Naive thymus-derived CD4-positive, alpha-beta T cell (primary cell): ENCODE measurements at regions of chr2 and their contacts with region 1.

Region 1: GRCh38 chr2:203989521-203989920 is 53.0 kb downstream of the ICOS start:
- DNase-seq: peak in 1 of 9 donors; percentile 8
- ATAC-seq: peak; percentile 5
- H3K4me3 ChIP-seq: no peak overlapping the region
- H3K4me3 Mint-ChIP-seq: peak overlapping the region in 5 of 10 donors; percentile 2 to 36 (median 16)
- H3K27ac ChIP-seq: no peak overlapping the region
- H3K27ac Mint-ChIP-seq: peak overlapping the region in 6 of 9 donors; percentile 21 to 62 (median 40)
- H3K4me1 ChIP-seq: peaks cover 7 to 13% of the 10 kb centered on the region in 2 donors
- H3K4me1 Mint-ChIP-seq: peaks cover 0 to 33% (median 26%) of the 10 kb centered on the region in 7 donors
- H3K27me3 ChIP-seq: no peaks in the 10 kb centered on the region
- H3K27me3 Mint-ChIP-seq: no peaks in the 10 kb centered on the region

Region 2: DNA sequence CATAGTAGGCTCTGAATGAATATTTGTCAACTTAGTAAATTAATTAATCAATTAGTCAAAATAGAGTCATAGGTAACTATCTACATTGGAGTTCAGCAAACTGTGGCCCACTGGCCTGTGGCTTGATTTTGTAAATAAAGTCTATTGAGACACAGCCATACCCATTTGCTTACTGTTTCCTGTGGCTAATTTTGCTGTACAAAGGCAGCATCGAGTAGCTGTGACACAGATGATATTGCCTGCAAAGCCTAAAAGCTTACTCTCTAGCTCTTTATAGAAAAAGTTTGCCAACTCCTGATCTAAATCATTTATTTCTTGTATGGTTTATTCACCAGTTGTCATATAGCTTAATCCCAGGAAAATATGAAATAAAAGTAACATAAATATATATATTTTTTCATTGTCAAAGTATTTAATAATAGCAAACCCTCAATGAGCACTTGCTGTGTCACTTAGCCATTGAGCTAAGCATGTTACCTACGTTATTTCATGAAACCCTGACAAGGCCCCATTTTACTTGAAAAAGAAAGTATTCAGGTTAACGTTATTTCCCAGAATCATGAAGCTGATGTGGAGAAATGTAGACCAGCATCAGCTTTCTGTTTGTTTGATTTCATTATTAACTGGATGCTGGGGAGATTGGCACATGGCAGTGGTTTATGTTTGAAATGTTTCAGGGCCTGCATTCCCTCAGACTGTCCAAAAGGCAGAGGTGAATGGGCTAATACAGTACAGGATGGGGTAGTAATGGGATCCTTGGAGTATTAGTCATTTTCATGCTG is 16.6 kb after region 1 on chr2:
- CTCF ChIA-PET with region 1: no interaction called
- POLR2A ChIA-PET with region 1: no interaction called
- intact Hi-C with region 1: loop called in 1 of 2 experiments (anchors 2 kb)
- DNase-seq: peak in 1 of 9 donors; percentile 23
- ATAC-seq: no peak
- H3K4me3 ChIP-seq: no peak overlapping the region
- H3K4me3 Mint-ChIP-seq: peak overlapping the region in 5 of 10 donors; percentile 17 to 59 (median 44)
- H3K27ac ChIP-seq: no peak overlapping the region
- H3K27ac Mint-ChIP-seq: peak overlapping the region in 5 of 9 donors; percentile 60 to 93 (median 83)
- H3K4me1 ChIP-seq: peaks cover 9 to 37% of the 10 kb centered on the region in 2 donors
- H3K4me1 Mint-ChIP-seq: peaks cover 24 to 81% (median 78%) of the 10 kb centered on the region in 7 donors
- H3K27me3 ChIP-seq: no peaks in the 10 kb centered on the region
- H3K27me3 Mint-ChIP-seq: no peaks in the 10 kb centered on the region

Region 3: GRCh38 chr2:205500065-205500464 is 1510.5 kb after region 1 on chr2:
- CTCF ChIA-PET with region 1: no interaction called
- POLR2A ChIA-PET with region 1: no interaction called
- intact Hi-C with region 1: no loop called
- DNase-seq: no peak
- ATAC-seq: peak; percentile 29
- H3K4me3 ChIP-seq: no peak overlapping the region
- H3K4me3 Mint-ChIP-seq: no peak overlapping the region
- H3K27ac ChIP-seq: no peak overlapping the region
- H3K27ac Mint-ChIP-seq: no peak overlapping the region
- H3K4me1 ChIP-seq: no peaks in the 10 kb centered on the region
- H3K4me1 Mint-ChIP-seq: peaks cover 0 to 10% (median 0%) of the 10 kb centered on the region in 7 donors
- H3K27me3 ChIP-seq: no peaks in the 10 kb centered on the region
- H3K27me3 Mint-ChIP-seq: peaks cover 0 to 14% (median 0%) of the 10 kb centered on the region in 5 donors